ENCODE measurements at regions of chr1 and their contacts with region 1.

Region 1: GRCh38 chr1:151165738-151166505 is at the starts of genes LYSMD1 and SCNM1:
- ATAC-seq: peak; percentile 75 to 93 (median 90)
- H3K4me3 ChIP-seq: peak within 1 kb of the TSS; percentile 58 to 79 (median 77)
- H3K27ac ChIP-seq: peak within 1 kb of the TSS; percentile 78 to 85
- H3K4me1 ChIP-seq: peaks cover 12 to 13% of the 10 kb centered on the region in 2 donors
- total RNA-seq, gene LYSMD1: 4.4 to 31.2 (median 18.1) TPM
- total RNA-seq, gene SCNM1: 41.0 to 115 (median 77.1) TPM

Region 2: DNA sequence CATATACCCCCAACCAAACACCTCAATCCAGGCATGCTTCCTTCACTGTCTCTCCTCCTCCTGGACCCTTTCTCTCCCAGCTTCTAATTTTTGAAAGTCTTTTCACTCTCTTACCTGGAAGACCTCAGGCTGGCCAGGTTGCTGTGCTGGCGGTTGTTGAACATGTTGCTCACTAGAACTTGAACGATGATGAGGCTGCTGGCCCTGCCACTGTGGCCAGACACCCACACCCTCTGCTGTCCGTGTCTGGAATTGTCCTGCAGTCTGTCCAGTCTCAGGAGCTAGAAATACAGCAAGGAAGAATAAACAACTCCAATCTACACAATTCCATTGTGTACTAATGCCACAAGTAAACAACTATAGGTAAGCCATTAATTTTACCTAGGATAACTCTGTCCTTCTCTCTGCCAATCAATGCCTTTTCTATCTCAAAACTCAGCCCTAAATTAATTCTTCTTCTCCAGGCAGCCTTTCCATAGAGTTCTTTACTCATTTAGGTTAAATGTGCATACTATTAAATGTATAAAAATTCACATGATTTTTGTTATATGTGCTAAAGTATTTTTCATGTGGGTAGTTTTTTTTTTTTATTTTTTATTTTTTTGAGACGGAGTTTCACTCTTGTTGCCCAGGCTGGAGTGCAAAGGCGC is 352.7 kb before region 1 on chr1:
- in situ Hi-C with region 1: no loop called
- ATAC-seq: peak in 6 of 8 experiments; percentile 38 to 92 (median 68)
- H3K4me3 ChIP-seq: no peak overlapping the region
- H3K27ac ChIP-seq: no peak overlapping the region
- H3K4me1 ChIP-seq: no peaks in the 10 kb centered on the region

Region 3: GRCh38 chr1:151070474-151071276 is 95.2 kb before region 1 on chr1 and contains the start of gene GABPB2:
- in situ Hi-C with region 1: loop called in 1 of 9 experiments (anchors 25 kb)
- ATAC-seq: peak; percentile 84 to 89 (median 86)
- H3K4me3 ChIP-seq: peak within 1 kb of the TSS; percentile 40 to 91 (median 48)
- H3K27ac ChIP-seq: peak within 1 kb of the TSS; percentile 91 to 96
- H3K4me1 ChIP-seq: peaks cover 11 to 15% of the 10 kb centered on the region in 2 donors
- total RNA-seq, gene GABPB2: 4.2 to 20.5 (median 6.1) TPM

Measured in motor neuron (in vitro differentiated cells).